GM12878 (cell line): ENCODE measurements at regions of chr19 and their contacts with region 1.

Region 1: GRCh38 chr19:43950834-43951645 is at the start of gene ZNF221:
- DNase-seq: peak; percentile 79
- ATAC-seq: peak; percentile 99
- H3K4me3 ChIP-seq: peak within 1 kb of the TSS; percentile 85
- H3K27ac ChIP-seq: peak within 1 kb of the TSS; percentile 49; the same call in 1 of the 2 replicates
- H3K4me1 ChIP-seq: no peaks in the 10 kb centered on the region
- H3K27me3 ChIP-seq: no peaks in the 10 kb centered on the region
- CTCF ChIP-seq: peak; percentile 21 to 43 (median 28); a peak in 4 of 6 replicates
- EP300 ChIP-seq: no peak
- POLR2A ChIP-seq: peak; percentile 15; the same call in 1 of the 2 replicates
- RAD21 ChIP-seq: no peak; the same call in 1 of the 2 replicates
- polyA plus RNA-seq, gene ZNF221: 0.16 to 0.47 TPM

Region 2: GRCh38 chr19:43880483-43880882 is 70.6 kb before region 1 on chr19:
- CTCF ChIA-PET with region 1: no interaction called
- POLR2A ChIA-PET with region 1: no interaction called
- RAD21 ChIA-PET with region 1: no interaction called
- SMC1A ChIA-PET with region 1: no interaction called
- in situ Hi-C with region 1: no loop called
- intact Hi-C with region 1: no loop called
- DNase-seq: no peak
- ATAC-seq: no peak
- H3K4me3 ChIP-seq: no peak overlapping the region
- H3K27ac ChIP-seq: no peak overlapping the region
- H3K4me1 ChIP-seq: no peaks in the 10 kb centered on the region
- H3K27me3 ChIP-seq: no peaks in the 10 kb centered on the region
- CTCF ChIP-seq: no peak
- EP300 ChIP-seq: no peak
- POLR2A ChIP-seq: no peak
- RAD21 ChIP-seq: no peak

Region 3: GRCh38 chr19:43934985-43935708 is 15.9 kb before region 1 on chr19 and contains the start of gene ZNF45:
- CTCF ChIA-PET with region 1: interaction called, 14 read pairs
- POLR2A ChIA-PET with region 1: interaction called, 16 read pairs
- RAD21 ChIA-PET with region 1: interaction called, 11 read pairs
- SMC1A ChIA-PET with region 1: interaction called, 12 read pairs
- in situ Hi-C with region 1: no loop called
- intact Hi-C with region 1: loop called (anchors 1 kb)
- DNase-seq: peak; percentile 60
- ATAC-seq: peak; percentile 99
- H3K4me3 ChIP-seq: peak within 1 kb of the TSS; percentile 82
- H3K27ac ChIP-seq: peak within 1 kb of the TSS; percentile 67
- H3K4me1 ChIP-seq: no peaks in the 10 kb centered on the region
- H3K27me3 ChIP-seq: no peaks in the 10 kb centered on the region
- CTCF ChIP-seq: no peak
- EP300 ChIP-seq: no peak
- POLR2A ChIP-seq: peak; percentile 61; the same call in 1 of the 2 replicates
- RAD21 ChIP-seq: no peak
- polyA plus RNA-seq, gene ZNF45: 4.2 to 5.0 TPM

Region 4: DNA sequence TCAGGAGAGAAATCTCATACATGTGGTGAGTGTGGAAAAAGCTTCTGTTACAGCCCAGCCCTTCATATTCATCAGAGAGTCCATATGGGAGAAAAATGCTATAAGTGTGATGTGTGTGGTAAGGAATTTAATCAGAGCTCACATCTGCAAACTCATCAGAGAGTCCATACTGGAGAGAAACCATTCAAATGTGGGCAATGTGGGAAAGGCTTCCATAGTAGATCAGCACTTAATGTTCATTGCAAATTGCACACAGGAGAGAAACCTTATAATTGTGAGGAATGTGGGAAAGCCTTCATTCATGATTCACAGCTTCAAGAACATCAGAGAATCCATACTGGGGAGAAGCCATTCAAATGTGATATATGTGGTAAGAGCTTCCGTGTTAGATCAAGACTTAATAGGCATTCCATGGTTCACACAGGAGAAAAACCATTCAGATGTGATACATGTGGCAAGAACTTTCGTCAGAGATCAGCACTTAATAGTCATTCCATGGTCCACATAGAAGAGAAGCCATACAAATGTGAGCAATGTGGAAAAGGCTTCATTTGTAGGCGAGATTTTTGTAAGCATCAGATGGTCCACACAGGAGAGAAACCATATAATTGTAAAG is 15.1 kb after region 1 on chr19:
- CTCF ChIA-PET with region 1: no interaction called
- POLR2A ChIA-PET with region 1: no interaction called
- RAD21 ChIA-PET with region 1: no interaction called
- SMC1A ChIA-PET with region 1: no interaction called
- in situ Hi-C with region 1: no loop called
- intact Hi-C with region 1: no loop called
- DNase-seq: no peak
- ATAC-seq: no peak
- H3K4me3 ChIP-seq: no peak overlapping the region
- H3K27ac ChIP-seq: no peak overlapping the region
- H3K4me1 ChIP-seq: no peaks in the 10 kb centered on the region
- H3K27me3 ChIP-seq: no peaks in the 10 kb centered on the region
- CTCF ChIP-seq: no peak
- EP300 ChIP-seq: no peak
- POLR2A ChIP-seq: no peak
- RAD21 ChIP-seq: no peak